ENCODE measurements at regions of chr3 and their contacts with region 1.

Region 1: GRCh38 chr3:15439476-15439875 is 12.1 kb downstream of the EAF1 start:
- DNase-seq: no peak
- H3K4me3 ChIP-seq: no peak overlapping the region
- H3K27ac ChIP-seq: no peak overlapping the region
- H3K4me1 ChIP-seq: no peaks in the 10 kb centered on the region
- H3K27me3 ChIP-seq: no peaks in the 10 kb centered on the region
- CTCF ChIP-seq: no peak
- POLR2A ChIP-seq: no peak

Region 2: GRCh38 chr3:14162185-14162584 is 1277.3 kb before region 1 on chr3:
- intact Hi-C with region 1: loop called (anchors 5 kb)
- DNase-seq: no peak
- H3K4me3 ChIP-seq: no peak overlapping the region
- H3K27ac ChIP-seq: no peak overlapping the region
- H3K4me1 ChIP-seq: no peaks in the 10 kb centered on the region
- H3K27me3 ChIP-seq: no peaks in the 10 kb centered on the region
- CTCF ChIP-seq: no peak
- POLR2A ChIP-seq: no peak

Region 3: DNA sequence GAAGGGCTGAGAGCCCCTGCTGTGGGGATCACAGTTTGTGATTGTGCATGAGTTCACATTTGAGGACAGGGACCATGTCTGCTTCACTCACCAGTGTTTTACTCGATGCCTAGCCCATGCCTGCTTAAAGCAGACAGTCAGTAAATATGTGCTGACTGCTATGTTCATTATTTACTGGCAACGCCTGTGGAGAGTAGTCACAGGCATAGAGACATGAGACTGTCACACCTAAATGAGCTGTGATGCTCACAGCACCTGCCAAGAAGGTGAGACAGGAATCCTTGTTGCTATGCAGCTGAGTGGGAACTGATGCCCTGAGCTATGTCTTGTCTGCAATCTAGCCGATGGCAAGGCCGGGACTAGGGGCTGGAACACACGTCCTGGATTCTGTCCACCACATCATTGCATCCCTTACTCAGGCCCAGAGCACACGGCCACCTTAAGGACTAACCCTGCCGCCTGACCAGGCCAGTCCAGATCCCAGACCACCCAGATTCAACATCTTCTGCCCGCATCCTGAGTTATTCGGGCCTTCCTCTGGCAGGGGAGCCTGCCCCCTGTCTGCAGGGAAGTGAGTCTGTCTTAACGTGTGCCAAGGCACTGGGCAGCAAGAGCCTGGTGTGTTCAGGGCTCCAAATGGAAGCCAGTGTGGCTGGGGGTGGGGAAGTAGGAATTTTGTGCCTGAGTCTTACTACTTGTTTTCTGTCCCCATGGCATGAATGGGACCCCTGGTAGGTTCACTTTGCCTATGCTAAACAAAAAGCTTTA is 576.0 kb before region 1 on chr3:
- intact Hi-C with region 1: no loop called
- DNase-seq: no peak
- H3K4me3 ChIP-seq: no peak overlapping the region
- H3K27ac ChIP-seq: peak overlapping the region in 1 of 2 donors; percentile 55
- H3K4me1 ChIP-seq: no peaks in the 10 kb centered on the region
- H3K27me3 ChIP-seq: no peaks in the 10 kb centered on the region
- CTCF ChIP-seq: peak in 1 of 3 donors; percentile 12
- POLR2A ChIP-seq: no peak